IMR-90 (cell line): ENCODE measurements at regions of chr5 and their contacts with region 1.

Region 1: DNA sequence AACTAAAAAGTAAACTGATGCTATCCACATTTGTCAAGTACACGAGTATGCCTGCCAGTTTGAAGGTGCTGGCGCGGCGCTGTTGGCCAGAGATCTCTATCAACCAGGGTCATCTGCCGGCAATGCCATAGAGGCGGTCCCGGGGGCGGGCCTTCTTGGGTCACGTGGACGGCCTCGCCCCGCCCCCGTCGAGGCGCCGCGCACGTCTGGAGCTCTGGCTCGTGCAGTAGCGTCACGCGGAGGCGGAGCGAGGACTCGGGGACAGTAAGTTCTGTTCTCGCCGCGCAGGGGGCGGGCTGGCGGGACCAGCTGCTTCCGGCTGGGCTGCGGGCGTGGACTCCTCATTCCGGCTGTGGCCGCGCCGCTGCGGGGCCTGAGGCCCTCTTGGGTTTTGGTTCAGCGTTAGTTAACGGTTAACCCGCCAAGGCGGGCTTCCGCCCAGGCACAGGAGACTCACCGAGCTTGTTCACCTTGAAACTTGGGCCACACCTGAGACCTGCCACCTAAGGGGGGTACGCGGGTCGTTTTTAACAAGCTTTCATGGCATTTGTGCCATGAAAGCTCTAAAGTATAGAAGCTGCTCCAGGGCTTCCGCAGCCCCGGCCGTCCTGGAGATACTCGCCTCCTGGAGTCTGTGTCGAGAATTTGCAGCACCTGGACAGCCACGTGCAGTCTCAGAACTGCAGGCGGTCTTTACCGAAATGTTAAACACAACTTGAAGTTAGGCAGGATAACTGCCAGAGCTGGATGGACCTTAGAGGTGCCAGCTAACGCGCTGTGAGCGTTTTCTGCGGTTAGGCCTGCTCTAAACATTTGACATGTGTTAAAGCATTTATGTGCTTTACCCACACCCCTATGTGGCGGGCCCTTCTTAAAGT is at the start of gene RFESD:
- DNase-seq: peak; percentile 93
- ATAC-seq: peak; percentile 96
- H3K4me3 ChIP-seq: peak within 1 kb of the TSS; percentile 55
- H3K27ac ChIP-seq: peak within 1 kb of the TSS; percentile 59
- H3K4me1 ChIP-seq: peaks cover 4% of the 10 kb centered on the region
- H3K27me3 ChIP-seq: no peaks in the 10 kb centered on the region
- CTCF ChIP-seq: peak; percentile 10; the same call in 1 of the 2 replicates
- POLR2A ChIP-seq: peak; percentile 83; the same call in 1 of the 2 replicates
- RAD21 ChIP-seq: no peak
- total RNA-seq, gene RFESD: 2.7 and 3.6 TPM in 2 replicates

Region 2: GRCh38 chr5:95600557-95600956 is 46.2 kb before region 1 on chr5:
- CTCF ChIA-PET with region 1: no interaction called
- POLR2A ChIA-PET with region 1: no interaction called
- dilution Hi-C with region 1: no loop called
- in situ Hi-C with region 1: no loop called
- intact Hi-C with region 1: no loop called
- DNase-seq: peak; percentile 82
- ATAC-seq: peak; percentile 81
- H3K4me3 ChIP-seq: no peak overlapping the region
- H3K27ac ChIP-seq: no peak overlapping the region
- H3K4me1 ChIP-seq: peaks cover 3% of the 10 kb centered on the region; the same call in 1 of the 2 replicates
- H3K27me3 ChIP-seq: no peaks in the 10 kb centered on the region
- CTCF ChIP-seq: no peak
- POLR2A ChIP-seq: no peak
- RAD21 ChIP-seq: no peak

Region 3: GRCh38 chr5:95781101-95781583 is 134.3 kb after region 1 on chr5:
- CTCF ChIA-PET with region 1: interaction called, 4 read pairs
- POLR2A ChIA-PET with region 1: no interaction called
- dilution Hi-C with region 1: no loop called
- in situ Hi-C with region 1: no loop called
- intact Hi-C with region 1: loop called (anchors 1 kb)
- DNase-seq: peak; percentile 85
- ATAC-seq: peak; percentile 75
- H3K4me3 ChIP-seq: no peak overlapping the region
- H3K27ac ChIP-seq: no peak overlapping the region; the same call in 1 of the 2 replicates
- H3K4me1 ChIP-seq: peaks cover 22% of the 10 kb centered on the region
- H3K27me3 ChIP-seq: no peaks in the 10 kb centered on the region
- CTCF ChIP-seq: peak; percentile 82
- POLR2A ChIP-seq: no peak; the same call in 1 of the 2 replicates
- RAD21 ChIP-seq: peak; percentile 83

Region 4: DNA sequence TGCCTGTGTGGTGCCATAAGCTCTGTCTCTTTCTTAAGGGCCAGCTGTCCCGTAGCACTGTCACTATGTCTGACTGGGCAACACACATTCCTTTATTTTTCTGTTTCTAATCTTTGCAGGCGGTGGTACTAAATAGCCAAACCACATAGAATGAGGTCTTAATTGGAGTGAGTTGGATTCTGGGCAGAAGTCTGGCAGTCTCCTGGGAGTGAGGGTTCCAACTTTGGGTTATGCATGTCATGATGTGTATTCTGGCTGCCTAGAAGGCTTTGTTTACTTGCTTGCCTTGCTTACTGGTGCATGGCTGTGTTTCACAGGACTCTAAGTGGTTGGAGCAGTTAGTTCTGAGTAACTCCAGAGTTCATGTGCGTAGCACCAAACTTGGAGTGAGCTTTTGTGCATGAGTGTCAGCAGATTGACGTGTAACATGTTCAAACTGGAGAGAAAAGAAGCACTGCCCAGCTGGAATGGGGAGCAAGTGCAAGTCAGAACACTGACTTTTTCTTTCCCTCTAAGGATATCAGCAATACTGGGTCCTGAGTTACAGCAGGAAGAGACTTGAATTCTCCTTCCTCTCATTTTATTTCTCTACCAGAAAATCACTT is 600.4 kb after region 1 on chr5:
- CTCF ChIA-PET with region 1: no interaction called
- POLR2A ChIA-PET with region 1: no interaction called
- dilution Hi-C with region 1: no loop called
- in situ Hi-C with region 1: no loop called
- intact Hi-C with region 1: no loop called
- DNase-seq: peak; percentile 78
- ATAC-seq: peak; percentile 54
- H3K4me3 ChIP-seq: no peak overlapping the region
- H3K27ac ChIP-seq: peak overlapping the region; percentile 95
- H3K4me1 ChIP-seq: peaks cover 29% of the 10 kb centered on the region
- H3K27me3 ChIP-seq: no peaks in the 10 kb centered on the region
- CTCF ChIP-seq: no peak
- POLR2A ChIP-seq: no peak
- RAD21 ChIP-seq: no peak

Region 5: GRCh38 chr5:96324708-96325107 is 677.9 kb after region 1 on chr5:
- CTCF ChIA-PET with region 1: no interaction called
- POLR2A ChIA-PET with region 1: no interaction called
- dilution Hi-C with region 1: no loop called
- in situ Hi-C with region 1: loop called (anchors 25 kb)
- intact Hi-C with region 1: no loop called
- DNase-seq: peak; percentile 96
- ATAC-seq: peak; percentile 58
- H3K4me3 ChIP-seq: no peak overlapping the region
- H3K27ac ChIP-seq: peak overlapping the region; percentile 39
- H3K4me1 ChIP-seq: peaks cover 16% of the 10 kb centered on the region; the same call in 1 of the 2 replicates
- H3K27me3 ChIP-seq: no peaks in the 10 kb centered on the region
- CTCF ChIP-seq: no peak
- POLR2A ChIP-seq: no peak
- RAD21 ChIP-seq: no peak

Region 6: DNA sequence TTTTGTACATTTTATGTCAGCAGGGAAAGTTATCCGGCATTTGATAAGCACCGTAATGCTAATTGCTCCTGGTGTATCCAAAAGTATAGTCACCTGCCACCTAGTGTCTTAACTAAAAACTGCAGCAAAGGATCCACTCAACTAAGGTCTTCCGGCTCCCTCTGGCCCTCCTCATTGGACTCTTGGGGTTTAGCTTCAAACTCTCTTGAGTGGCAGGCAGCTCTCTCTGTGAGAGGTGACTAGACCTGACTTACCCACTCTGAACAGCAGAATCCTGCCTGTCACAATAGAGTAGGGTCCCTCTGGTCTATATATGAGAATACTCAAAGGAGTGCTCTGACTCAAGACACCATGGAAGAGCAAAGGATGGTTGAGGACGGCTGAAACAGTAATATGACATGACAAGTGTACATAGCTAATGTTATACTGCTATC is 955.0 kb after region 1 on chr5:
- CTCF ChIA-PET with region 1: no interaction called
- POLR2A ChIA-PET with region 1: no interaction called
- dilution Hi-C with region 1: no loop called
- in situ Hi-C with region 1: no loop called
- intact Hi-C with region 1: loop called (anchors 10 kb)
- DNase-seq: peak; percentile 75
- ATAC-seq: peak; percentile 86
- H3K4me3 ChIP-seq: no peak overlapping the region
- H3K27ac ChIP-seq: no peak overlapping the region
- H3K4me1 ChIP-seq: no peaks in the 10 kb centered on the region
- H3K27me3 ChIP-seq: no peaks in the 10 kb centered on the region
- CTCF ChIP-seq: peak; percentile 80
- POLR2A ChIP-seq: no peak
- RAD21 ChIP-seq: peak; percentile 82